Activated CD4-positive, alpha-beta memory T cell treated with anti-CD3 and anti-CD28 coated beads for 36 hours (primary cell): ENCODE measurements at regions of chr16 and their contacts with region 1.

Region 1: GRCh38 chr16:75622761-75623605 is at the start of gene ADAT1:
- DNase-seq: peak; percentile 99
- H3K4me3 Mint-ChIP-seq: peak within 1 kb of the TSS; percentile 96
- H3K27ac Mint-ChIP-seq: peak within 1 kb of the TSS; percentile 97
- H3K4me1 Mint-ChIP-seq: peaks cover 52% of the 10 kb centered on the region
- H3K27me3 Mint-ChIP-seq: no peaks in the 10 kb centered on the region
- total RNA-seq, gene ADAT1: 39.9 to 40.2 TPM

Region 2: DNA sequence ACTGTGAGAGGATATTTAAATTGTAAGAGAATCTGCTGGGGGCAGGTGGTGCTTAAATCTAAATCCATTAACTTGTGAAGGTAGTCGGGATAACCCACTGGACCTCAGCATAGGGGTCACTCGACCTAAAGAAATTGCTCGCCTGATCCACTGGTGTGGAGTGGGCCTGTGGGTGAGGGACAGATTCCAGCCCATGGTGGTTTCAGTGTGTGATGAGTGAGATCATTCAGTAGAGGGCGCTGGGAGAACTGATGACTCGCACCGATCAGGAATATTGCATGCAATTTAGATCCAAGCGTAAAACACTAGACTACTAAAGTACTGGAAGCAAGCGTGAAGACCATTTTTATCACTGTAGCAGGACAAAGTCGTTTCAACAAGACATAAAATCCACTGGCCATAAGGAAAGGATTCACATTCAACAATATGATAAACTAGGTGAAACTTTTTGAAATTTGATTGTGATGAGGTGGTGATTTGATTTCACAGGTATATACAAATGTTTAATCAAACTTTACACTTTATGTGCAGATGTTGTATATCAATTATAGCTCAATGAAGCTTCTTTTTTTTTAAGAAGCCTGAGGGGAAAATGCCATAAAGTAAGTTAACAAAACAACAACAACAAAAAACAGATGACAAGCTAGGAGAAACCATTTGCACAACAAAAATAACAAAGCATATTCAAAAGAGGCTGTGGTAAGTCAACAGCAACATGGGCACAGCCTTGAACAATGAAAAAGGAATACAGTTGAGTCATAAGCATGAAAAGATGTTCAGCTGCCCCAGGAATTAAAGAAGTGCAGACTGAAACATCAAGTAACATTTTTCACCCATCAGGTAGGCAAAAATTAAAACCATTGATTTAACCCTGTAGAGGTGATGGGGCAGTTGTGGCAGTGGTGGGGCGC is 151.0 kb before region 1 on chr16:
- CTCF ChIA-PET with region 1: interaction called, 10 read pairs
- POLR2A ChIA-PET with region 1: no interaction called
- intact Hi-C with region 1: no loop called
- DNase-seq: peak; percentile 54
- H3K4me3 Mint-ChIP-seq: no peak overlapping the region
- H3K27ac Mint-ChIP-seq: no peak overlapping the region
- H3K4me1 Mint-ChIP-seq: no peaks in the 10 kb centered on the region
- H3K27me3 Mint-ChIP-seq: no peaks in the 10 kb centered on the region

Region 3: GRCh38 chr16:75555707-75556430 is 67.1 kb before region 1 on chr16 and contains the start of gene TMEM231:
- CTCF ChIA-PET with region 1: interaction called, 8 read pairs
- POLR2A ChIA-PET with region 1: no interaction called
- intact Hi-C with region 1: loop called (anchors 1 kb)
- DNase-seq: peak; percentile 98
- H3K4me3 Mint-ChIP-seq: peak within 1 kb of the TSS; percentile 88
- H3K27ac Mint-ChIP-seq: peak within 1 kb of the TSS; percentile 85
- H3K4me1 Mint-ChIP-seq: peaks cover 3% of the 10 kb centered on the region
- H3K27me3 Mint-ChIP-seq: peaks cover 4% of the 10 kb centered on the region
- total RNA-seq, gene TMEM231: 4.6 to 5.3 TPM

Region 4: DNA sequence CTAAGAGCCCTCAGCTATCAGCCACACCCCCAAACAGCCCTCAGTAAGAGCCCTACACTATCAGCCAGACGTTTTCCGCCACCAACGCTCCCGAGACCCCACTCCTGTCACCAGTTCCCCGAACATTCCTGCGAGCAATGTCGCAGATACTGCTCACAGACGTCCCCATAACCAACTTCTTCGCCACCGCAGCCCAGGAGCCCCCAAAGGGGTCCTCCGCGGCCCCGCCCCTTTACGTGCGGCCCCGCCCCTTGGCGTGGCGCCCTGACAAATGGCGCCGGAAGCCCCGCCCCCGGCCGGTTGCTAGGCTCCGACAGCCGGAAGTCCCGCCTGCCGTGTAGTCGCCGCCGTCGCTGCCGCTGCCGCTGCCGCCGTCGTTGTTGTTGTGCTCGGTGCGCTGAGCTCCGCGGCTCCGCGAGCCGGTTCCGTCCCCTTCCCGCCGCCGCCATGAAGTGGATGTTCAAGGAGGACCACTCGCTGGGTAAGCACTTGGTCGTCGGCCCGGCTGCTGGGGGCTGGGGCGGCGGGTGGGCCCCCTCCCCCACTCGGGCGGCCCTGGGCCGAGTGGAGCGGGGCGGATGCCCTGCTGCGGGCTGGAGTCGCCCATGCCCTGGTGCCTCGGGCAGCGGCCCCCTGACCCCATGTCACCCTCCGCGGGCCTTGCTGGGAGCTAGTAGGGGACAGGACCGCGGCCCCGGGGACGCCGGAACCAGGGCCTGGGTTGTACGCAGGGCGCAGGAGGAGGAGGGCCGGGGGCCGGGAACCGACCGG is 56.8 kb before region 1 on chr16 and contains the start of gene GABARAPL2:
- CTCF ChIA-PET with region 1: interaction called, 4 read pairs
- POLR2A ChIA-PET with region 1: interaction called, 17 read pairs
- intact Hi-C with region 1: loop called (anchors 1 kb)
- DNase-seq: peak; percentile 92
- H3K4me3 Mint-ChIP-seq: peak within 1 kb of the TSS; percentile 94
- H3K27ac Mint-ChIP-seq: peak within 1 kb of the TSS; percentile 85
- H3K4me1 Mint-ChIP-seq: peaks cover 40% of the 10 kb centered on the region
- H3K27me3 Mint-ChIP-seq: peaks cover 7% of the 10 kb centered on the region
- total RNA-seq, gene GABARAPL2: 71.5 to 76.1 TPM